ENCODE measurements at regions of chr11 and their contacts with region 1.

Region 1: GRCh38 chr11:58659404-58659803 is 36.9 kb downstream of the CNTF start:
- DNase-seq: peak; percentile 98
- ATAC-seq: peak; percentile 93
- H3K4me3 ChIP-seq: peak overlapping the region; percentile 39; the same call in 1 of the 2 replicates
- H3K27ac ChIP-seq: peak overlapping the region; percentile 85
- H3K4me1 ChIP-seq: peaks cover 38% of the 10 kb centered on the region
- H3K27me3 ChIP-seq: no peaks in the 10 kb centered on the region
- CTCF ChIP-seq: no peak

Region 2: GRCh38 chr11:58573451-58574104 is 85.8 kb before region 1 on chr11:
- CTCF ChIA-PET with region 1: no interaction called
- POLR2A ChIA-PET with region 1: no interaction called
- intact Hi-C with region 1: loop called (anchors 1 kb)
- DNase-seq: peak; percentile 96
- ATAC-seq: peak; percentile 46
- H3K4me3 ChIP-seq: peak overlapping the region; percentile 57
- H3K27ac ChIP-seq: peak overlapping the region; percentile 97
- H3K4me1 ChIP-seq: peaks cover 47% of the 10 kb centered on the region
- H3K27me3 ChIP-seq: no peaks in the 10 kb centered on the region
- CTCF ChIP-seq: no peak

Region 3: DNA sequence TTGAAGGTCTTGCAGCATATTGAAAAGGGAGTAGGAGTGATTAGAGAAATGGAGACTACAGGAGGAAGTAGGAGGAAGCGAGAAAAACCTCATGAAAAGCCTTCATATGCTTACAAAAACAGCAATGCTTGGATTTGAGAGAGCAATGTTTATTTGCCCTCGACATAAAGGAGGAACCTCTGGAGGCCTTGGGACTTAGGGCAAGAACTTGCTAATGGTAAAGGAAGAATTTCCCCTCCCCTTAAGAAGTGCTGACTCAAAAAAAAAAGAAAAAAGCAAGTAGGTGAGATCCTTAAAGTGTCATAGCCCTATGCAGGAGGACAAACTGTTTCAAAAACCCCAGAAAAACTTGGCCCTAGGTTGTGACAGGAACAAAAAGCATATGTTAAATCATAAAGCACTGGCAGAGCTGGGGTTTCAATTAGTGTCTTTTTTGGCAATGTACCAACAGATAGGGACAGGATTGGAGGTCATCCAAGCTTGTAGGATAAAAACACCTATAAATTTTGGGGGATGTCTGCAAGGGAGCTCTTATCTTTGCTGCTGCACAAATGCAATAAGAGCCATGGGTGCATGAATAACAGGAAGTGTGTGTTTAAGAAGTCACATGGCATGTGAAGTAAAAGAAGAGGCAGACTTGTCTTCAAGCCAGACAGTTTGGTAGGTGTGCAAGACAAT is 67.5 kb after region 1 on chr11:
- CTCF ChIA-PET with region 1: no interaction called
- POLR2A ChIA-PET with region 1: no interaction called
- intact Hi-C with region 1: no loop called
- DNase-seq: no peak
- ATAC-seq: no peak
- H3K4me3 ChIP-seq: no peak overlapping the region
- H3K27ac ChIP-seq: no peak overlapping the region
- H3K4me1 ChIP-seq: no peaks in the 10 kb centered on the region
- H3K27me3 ChIP-seq: peaks cover 17% of the 10 kb centered on the region
- CTCF ChIP-seq: no peak